ENCODE measurements at regions of chr6 and their contacts with region 1.

Region 1: DNA sequence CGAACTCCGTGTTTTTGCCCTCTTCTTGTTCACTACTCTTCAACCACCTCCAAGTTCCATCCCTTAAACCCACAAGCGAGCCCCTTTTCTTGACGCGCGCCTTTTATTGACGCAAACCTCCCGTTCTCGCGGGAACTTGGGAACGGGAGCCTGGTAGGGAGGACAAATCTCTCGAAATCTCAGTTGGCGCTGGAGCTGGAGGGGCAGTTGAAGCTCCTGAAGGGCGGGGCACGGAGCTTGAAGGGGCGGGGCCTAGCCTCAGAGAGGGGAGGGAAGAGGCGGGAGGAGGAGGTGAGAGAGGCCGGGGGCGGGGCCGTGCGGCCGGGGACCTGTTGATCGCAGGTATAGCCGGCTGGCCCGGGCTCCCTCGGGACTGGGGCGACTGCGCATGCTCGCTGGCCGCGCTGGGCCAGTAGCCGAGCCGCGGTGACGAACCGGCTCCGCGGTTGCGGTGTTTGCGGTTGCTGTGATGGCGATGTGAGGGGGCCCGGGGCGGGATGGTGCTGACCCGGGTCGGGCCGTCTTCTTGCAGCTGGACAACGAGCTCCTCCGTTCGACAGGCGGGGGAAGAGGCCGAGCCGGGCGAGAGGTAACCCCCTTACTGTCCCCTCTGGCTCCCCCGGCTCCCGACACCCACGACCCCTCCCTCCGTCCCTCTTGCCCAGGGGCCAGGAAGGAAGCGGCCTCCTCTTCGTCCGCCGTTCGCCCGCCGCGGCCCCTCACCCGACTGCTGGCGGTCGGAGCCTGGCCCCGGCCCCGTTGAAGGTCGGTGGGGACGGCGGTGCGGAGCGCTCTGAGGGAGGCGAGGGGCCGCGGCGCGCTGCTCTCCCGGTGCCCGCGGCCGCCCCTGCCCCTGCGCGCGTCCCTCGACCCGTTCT is at the start of gene FAM135A:
- DNase-seq: peak; percentile 80 to 94 (median 89)
- ATAC-seq: peak; percentile 98
- H3K4me3 ChIP-seq: peak within 1 kb of the TSS; percentile 79
- H3K4me3 Mint-ChIP-seq: peak within 1 kb of the TSS; percentile 91 to 99 (median 94)
- H3K27ac ChIP-seq: peak within 1 kb of the TSS; percentile 69
- H3K27ac Mint-ChIP-seq: peak within 1 kb of the TSS; percentile 82 to 96 (median 92)
- H3K4me1 ChIP-seq: peaks cover 0 to 4% of the 10 kb centered on the region in 2 donors
- H3K4me1 Mint-ChIP-seq: peaks cover 7 to 27% (median 26%) of the 10 kb centered on the region in 7 donors
- H3K27me3 ChIP-seq: no peaks in the 10 kb centered on the region
- H3K27me3 Mint-ChIP-seq: peaks cover 0 to 18% (median 0%) of the 10 kb centered on the region in 5 donors
- total RNA-seq, gene FAM135A: 6.8 to 15.4 (median 12.3) TPM

Region 2: DNA sequence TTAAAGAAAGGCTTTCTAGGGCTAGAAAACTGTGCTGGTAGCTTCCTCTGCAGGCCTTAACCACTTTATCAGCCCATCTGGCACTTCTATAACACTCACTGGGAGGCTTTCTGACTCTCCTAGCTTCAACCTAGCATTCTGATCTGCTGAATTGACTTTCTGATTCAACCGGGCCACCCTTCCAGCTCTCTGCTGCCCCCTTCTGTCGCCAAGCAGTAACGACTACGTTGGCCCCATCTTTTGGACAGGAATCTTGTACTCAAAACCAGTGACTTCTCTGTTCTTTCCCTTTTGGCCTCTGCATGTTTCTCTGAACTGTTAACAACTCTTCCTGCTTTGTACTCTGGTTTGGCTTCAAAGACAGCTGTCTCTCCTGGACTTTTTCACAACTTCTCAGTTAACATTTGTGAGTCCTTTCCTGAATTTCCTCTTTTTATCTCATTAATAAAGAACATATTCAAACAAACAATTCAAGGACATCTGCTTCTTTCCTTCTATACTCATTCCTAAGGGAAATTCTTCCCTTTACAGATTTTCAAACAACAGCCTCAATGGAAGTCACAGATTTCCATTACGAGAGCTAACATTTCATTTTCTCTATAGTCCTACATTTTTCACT is 43.9 kb before region 1 on chr6:
- CTCF ChIA-PET with region 1: interaction called, 5 read pairs
- POLR2A ChIA-PET with region 1: interaction called, 5 read pairs
- intact Hi-C with region 1: loop called (anchors 1 to 2 kb)
- DNase-seq: peak; percentile 26 to 64 (median 58)
- ATAC-seq: peak; percentile 92
- H3K4me3 ChIP-seq: no peak overlapping the region
- H3K4me3 Mint-ChIP-seq: no peak overlapping the region
- H3K27ac ChIP-seq: no peak overlapping the region
- H3K27ac Mint-ChIP-seq: no peak overlapping the region
- H3K4me1 ChIP-seq: no peaks in the 10 kb centered on the region
- H3K4me1 Mint-ChIP-seq: peaks cover 0 to 7% (median 0%) of the 10 kb centered on the region in 7 donors
- H3K27me3 ChIP-seq: no peaks in the 10 kb centered on the region
- H3K27me3 Mint-ChIP-seq: peaks cover 10 to 39% (median 19%) of the 10 kb centered on the region in 5 donors

Region 3: GRCh38 chr6:70380271-70380670 is 33.1 kb before region 1 on chr6:
- CTCF ChIA-PET with region 1: no interaction called
- POLR2A ChIA-PET with region 1: no interaction called
- intact Hi-C with region 1: no loop called
- DNase-seq: no peak
- ATAC-seq: no peak
- H3K4me3 ChIP-seq: no peak overlapping the region
- H3K4me3 Mint-ChIP-seq: no peak overlapping the region
- H3K27ac ChIP-seq: no peak overlapping the region
- H3K27ac Mint-ChIP-seq: no peak overlapping the region
- H3K4me1 ChIP-seq: no peaks in the 10 kb centered on the region
- H3K4me1 Mint-ChIP-seq: no peaks in the 10 kb centered on the region
- H3K27me3 ChIP-seq: no peaks in the 10 kb centered on the region
- H3K27me3 Mint-ChIP-seq: peaks cover 4 to 30% (median 19%) of the 10 kb centered on the region in 5 donors

Region 4: GRCh38 chr6:70651326-70651905 is 238.1 kb after region 1 on chr6:
- CTCF ChIA-PET with region 1: no interaction called
- POLR2A ChIA-PET with region 1: no interaction called
- intact Hi-C with region 1: loop called in 1 of 2 experiments (anchors 1 kb)
- DNase-seq: peak in 8 of 9 donors; percentile 24 to 68 (median 58)
- ATAC-seq: peak; percentile 82
- H3K4me3 ChIP-seq: peak overlapping the region; percentile 18
- H3K4me3 Mint-ChIP-seq: peak overlapping the region; percentile 25 to 75 (median 58)
- H3K27ac ChIP-seq: peak overlapping the region; percentile 6
- H3K27ac Mint-ChIP-seq: peak overlapping the region; percentile 32 to 84 (median 76)
- H3K4me1 ChIP-seq: peaks cover 21 to 22% of the 10 kb centered on the region in 2 donors
- H3K4me1 Mint-ChIP-seq: peaks cover 13 to 52% (median 25%) of the 10 kb centered on the region in 7 donors
- H3K27me3 ChIP-seq: no peaks in the 10 kb centered on the region
- H3K27me3 Mint-ChIP-seq: no peaks in the 10 kb centered on the region

Region 5: DNA sequence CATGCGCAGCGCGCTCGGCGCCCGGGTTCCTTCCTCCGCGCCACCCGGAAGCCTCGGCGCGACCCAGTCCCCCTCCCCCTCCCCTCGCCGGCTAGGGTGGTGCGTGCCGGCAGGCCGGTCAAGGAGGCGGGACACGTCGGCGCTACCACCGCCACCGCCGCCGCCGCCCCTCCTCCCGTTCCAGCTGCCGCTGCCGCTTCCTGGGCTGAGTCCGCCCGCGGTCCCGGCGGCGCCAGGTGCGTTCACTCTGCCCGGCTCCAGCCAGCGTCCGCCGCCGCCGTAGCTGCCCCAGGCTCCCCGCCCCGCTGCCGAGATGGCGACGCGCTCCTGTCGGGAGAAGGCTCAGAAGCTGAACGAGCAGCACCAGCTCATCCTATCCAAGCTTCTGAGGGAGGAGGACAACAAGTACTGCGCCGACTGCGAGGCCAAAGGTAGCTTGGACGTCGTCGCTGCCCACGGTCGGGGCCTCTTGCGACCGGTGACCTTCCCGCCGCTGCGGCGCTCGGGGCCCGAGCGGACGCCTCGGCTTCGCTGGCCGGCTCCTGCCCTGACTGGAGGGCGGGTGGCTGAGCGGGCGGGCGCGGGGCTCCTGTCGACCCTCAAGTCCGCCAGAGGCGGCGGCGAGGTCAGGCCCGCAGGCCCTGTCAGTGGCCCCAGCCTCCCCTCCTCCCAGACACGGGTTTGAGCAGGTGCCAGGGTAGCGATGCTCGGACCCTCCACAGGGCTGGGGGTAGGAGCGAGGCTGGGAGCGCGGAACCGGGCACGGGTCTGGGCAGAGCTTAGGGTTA is 254.6 kb after region 1 on chr6 and contains the start of gene SMAP1:
- CTCF ChIA-PET with region 1: no interaction called
- POLR2A ChIA-PET with region 1: interaction called, 11 read pairs
- intact Hi-C with region 1: loop called (anchors 1 kb)
- DNase-seq: peak; percentile 84 to 96 (median 90)
- ATAC-seq: peak; percentile 97
- H3K4me3 ChIP-seq: peak within 1 kb of the TSS; percentile 69
- H3K4me3 Mint-ChIP-seq: peak within 1 kb of the TSS; percentile 83 to 96 (median 90)
- H3K27ac ChIP-seq: peak within 1 kb of the TSS; percentile 82
- H3K27ac Mint-ChIP-seq: peak within 1 kb of the TSS; percentile 92 to 98 (median 95)
- H3K4me1 ChIP-seq: peaks cover 23 to 26% of the 10 kb centered on the region in 2 donors
- H3K4me1 Mint-ChIP-seq: peaks cover 40 to 58% (median 55%) of the 10 kb centered on the region in 7 donors
- H3K27me3 ChIP-seq: no peaks in the 10 kb centered on the region
- H3K27me3 Mint-ChIP-seq: no peaks in the 10 kb centered on the region
- total RNA-seq, gene SMAP1: 18.7 to 45.7 (median 20.8) TPM

Region 6: DNA sequence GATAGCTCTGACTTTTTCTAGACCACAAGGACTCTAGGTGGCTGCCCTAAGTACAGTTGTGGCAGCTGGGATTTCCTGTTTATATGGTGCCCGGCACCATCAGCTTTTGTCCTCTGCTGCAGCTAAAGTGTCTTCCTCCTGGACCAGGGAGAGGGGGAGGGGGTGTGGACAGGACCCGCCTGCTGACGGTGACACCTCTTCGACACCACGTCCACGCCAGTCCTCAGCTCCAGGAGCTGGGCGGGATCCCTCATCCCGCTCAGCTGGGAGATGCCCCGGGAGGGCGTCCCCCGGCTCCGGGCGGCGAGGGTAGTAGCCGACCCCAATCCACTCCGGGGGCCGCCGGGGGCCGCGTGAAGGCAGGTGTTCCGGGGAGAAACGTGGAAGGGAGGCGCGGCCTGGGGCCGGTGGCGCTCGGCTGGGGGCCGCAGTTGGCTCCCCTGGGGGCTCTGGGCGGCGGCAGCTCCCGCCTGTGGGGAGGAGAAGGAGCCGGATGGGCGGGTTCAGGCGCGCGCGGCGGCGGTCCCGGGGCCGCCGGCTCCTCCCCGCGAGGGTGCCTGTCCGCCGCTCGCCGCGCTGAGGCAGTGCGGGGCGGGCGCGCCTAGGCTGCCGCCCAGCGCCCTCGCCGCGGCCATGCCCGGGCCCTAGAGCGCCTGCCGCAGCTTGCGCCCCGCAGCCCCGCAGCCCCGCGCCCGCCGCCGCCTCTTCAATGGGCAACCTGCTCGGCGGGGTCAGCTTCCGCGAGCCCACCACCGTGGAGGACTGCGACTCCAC is 875.1 kb after region 1 on chr6 and contains the start of gene OGFRL1:
- CTCF ChIA-PET with region 1: no interaction called
- POLR2A ChIA-PET with region 1: interaction called, 6 read pairs
- intact Hi-C with region 1: loop called (anchors 5 kb)
- DNase-seq: peak; percentile 45 to 74 (median 64)
- ATAC-seq: peak; percentile 94
- H3K4me3 ChIP-seq: peak within 1 kb of the TSS; percentile 68
- H3K4me3 Mint-ChIP-seq: peak within 1 kb of the TSS; percentile 76 to 88 (median 83)
- H3K27ac ChIP-seq: peak within 1 kb of the TSS; percentile 70
- H3K27ac Mint-ChIP-seq: peak within 1 kb of the TSS; percentile 78 to 93 (median 83)
- H3K4me1 ChIP-seq: peaks cover 5 to 26% of the 10 kb centered on the region in 2 donors
- H3K4me1 Mint-ChIP-seq: peaks cover 29 to 43% (median 35%) of the 10 kb centered on the region in 7 donors
- H3K27me3 ChIP-seq: no peaks in the 10 kb centered on the region
- H3K27me3 Mint-ChIP-seq: peaks cover 0 to 24% (median 0%) of the 10 kb centered on the region in 5 donors
- total RNA-seq, gene OGFRL1: 4.3 to 30.4 (median 4.7) TPM